Astrocyte of the cerebellum (primary cell): ENCODE measurements at regions of chr10 and their contacts with region 1.

Region 1: GRCh38 chr10:89207181-89207800 is at the start of gene CH25H:
- DNase-seq: peak; percentile 57
- H3K4me3 ChIP-seq: peak within 1 kb of the TSS; percentile 52
- CTCF ChIP-seq: no peak

Region 2: GRCh38 chr10:88848499-88848898 is 358.8 kb before region 1 on chr10:
- in situ Hi-C with region 1: loop called (anchors 5 kb)
- DNase-seq: peak; percentile 45
- H3K4me3 ChIP-seq: no peak overlapping the region
- CTCF ChIP-seq: no peak

Region 3: DNA sequence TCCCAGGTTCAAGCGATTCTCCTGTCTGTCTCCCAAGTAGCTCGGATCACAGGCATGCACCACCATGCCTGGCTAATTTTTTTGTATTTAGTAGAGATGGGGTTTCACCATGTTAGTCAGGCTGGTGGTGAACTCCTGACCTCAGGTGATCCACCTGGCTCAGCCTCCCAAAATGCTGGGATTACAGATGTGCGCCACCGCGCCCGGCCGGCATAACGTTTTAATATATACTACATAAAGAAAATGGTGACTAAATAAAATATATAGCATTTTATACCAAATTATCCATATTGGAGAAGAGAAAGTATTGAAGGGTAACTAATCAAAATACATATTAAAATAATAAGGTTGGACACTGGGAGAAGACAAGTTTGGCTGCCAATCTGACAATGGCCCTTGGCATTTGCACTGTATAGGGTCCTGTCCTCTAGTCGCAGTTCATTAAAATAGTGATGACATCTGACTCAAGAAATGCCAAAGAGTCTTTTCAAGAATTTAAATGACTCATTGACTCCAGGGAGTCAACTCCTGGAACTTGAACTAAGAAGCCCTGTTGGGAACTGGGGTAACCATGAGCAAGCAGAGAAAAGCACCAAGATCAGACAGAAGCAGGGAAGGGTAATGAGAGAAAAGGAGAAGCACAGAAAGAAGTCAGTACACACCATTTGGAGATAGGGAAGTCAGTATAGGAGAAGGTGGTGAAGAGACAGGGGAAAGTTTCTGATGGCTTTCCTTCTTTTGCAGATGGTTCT is 91.2 kb before region 1 on chr10:
- in situ Hi-C with region 1: loop called (anchors 10 kb)
- DNase-seq: no peak
- H3K4me3 ChIP-seq: no peak overlapping the region
- CTCF ChIP-seq: no peak